Left cardiac atrium (tissue), 4 donors: ENCODE measurements at regions of chr2 and their contacts with region 1.

Region 1: DNA sequence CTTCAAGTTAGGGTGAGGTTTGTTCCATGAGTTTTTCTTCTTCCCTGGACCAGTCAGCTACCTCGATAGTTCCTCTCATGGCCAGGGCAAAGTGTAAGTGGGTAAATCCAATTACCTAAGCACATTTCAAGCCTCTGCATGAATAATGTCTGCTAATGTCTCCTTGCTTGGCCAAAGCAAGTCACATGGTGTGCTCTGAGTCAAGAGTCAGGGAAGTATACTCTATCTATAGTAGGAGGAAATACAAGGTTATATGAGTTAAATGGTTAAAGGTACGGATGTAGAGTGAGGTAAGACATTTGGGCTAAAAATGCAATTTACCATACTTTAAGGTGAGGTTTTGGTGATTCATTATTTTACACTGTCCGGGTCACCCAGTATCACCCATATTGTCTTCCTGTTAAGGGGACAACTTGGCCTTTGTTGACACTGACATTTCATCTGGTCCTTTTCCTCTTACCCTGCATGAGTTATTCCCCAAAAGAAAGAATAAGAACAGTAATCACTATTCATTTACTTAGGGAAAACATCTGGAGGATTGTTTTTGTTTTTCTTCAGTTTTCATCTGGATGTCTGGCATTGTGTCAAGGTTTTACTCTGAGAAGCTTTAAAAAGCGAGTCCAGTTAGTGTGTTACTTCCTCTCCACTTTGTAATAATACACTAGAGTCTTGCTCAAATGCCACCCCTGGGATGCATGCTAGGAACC is 405.5 kb downstream of the RND3 start:
- DNase-seq: no peak
- ATAC-seq: peak in 1 of 2 donors; percentile 22

Region 2: GRCh38 chr2:150097891-150098595 is 16.1 kb after region 1 on chr2:
- intact Hi-C with region 1: loop called in 1 of 2 experiments (anchors 1 kb)
- DNase-seq: no peak
- ATAC-seq: peak in 1 of 2 donors; percentile 64